ENCODE measurements at regions of chr15 and their contacts with region 1.

Region 1: GRCh38 chr15:73633111-73633990 is at the start of gene NPTN:
- DNase-seq: peak; percentile 98 to 100 (median 99)
- ATAC-seq: peak; percentile 95
- H3K4me3 ChIP-seq: peak within 1 kb of the TSS; percentile 96
- H3K4me1 ChIP-seq: peaks cover 46% of the 10 kb centered on the region
- CTCF ChIP-seq: no peak
- total RNA-seq, gene NPTN: 157 to 200 (median 168) TPM

Region 2: GRCh38 chr15:73550190-73550589 is 83.2 kb before region 1 on chr15:
- intact Hi-C with region 1: loop called (anchors 5 kb)
- DNase-seq: no peak
- ATAC-seq: no peak
- H3K4me3 ChIP-seq: no peak overlapping the region
- H3K4me1 ChIP-seq: no peaks in the 10 kb centered on the region
- CTCF ChIP-seq: no peak

Region 3: GRCh38 chr15:73560501-73561117 is 72.7 kb before region 1 on chr15:
- intact Hi-C with region 1: loop called in 1 of 2 experiments (anchors 5 kb)
- DNase-seq: peak in 1 of 3 donors; percentile 70
- ATAC-seq: peak; percentile 80
- H3K4me3 ChIP-seq: no peak overlapping the region
- H3K4me1 ChIP-seq: no peaks in the 10 kb centered on the region
- CTCF ChIP-seq: peak; percentile 22

Region 4: GRCh38 chr15:73683777-73684580 is 50.6 kb after region 1 on chr15 and contains the start of gene CD276:
- intact Hi-C with region 1: loop called in 1 of 2 experiments (anchors 10 kb)
- DNase-seq: peak; percentile 78 to 83 (median 82)
- ATAC-seq: peak; percentile 86
- H3K4me3 ChIP-seq: peak within 1 kb of the TSS; percentile 63
- H3K4me1 ChIP-seq: peaks cover 11% of the 10 kb centered on the region
- CTCF ChIP-seq: no peak
- total RNA-seq, gene CD276: 26.2 to 39.2 (median 29.9) TPM

Region 5: DNA sequence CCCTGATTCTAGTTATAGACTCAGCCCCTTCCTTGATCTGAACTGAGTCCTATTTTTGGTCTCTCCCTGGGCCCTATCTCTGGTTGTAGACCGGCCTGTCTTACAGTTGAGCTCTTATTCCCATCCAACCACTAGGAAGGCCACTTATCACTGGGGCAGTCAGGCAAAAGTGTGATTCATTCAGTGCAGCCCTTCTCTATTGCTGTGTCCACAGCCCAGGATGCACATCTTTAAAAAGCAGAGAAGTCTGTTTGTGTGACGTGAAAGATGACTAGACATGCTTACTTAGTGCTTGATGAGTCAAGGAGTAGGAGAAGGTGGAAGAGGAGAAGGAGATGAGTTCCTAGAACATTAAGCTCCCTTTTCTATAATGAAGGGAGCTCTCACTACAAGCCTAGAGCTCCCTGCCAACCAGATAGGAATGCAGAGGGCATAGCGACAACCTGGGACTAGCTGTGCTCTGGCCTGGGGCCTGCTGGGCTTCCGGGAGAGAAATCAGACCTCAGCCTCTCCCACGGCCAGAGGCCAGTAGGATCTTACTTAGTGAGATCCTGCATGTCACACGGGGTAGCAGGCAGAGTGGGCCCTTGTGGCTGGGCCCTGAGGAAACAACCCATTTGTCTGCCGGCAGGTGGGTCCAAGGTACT is 94.1 kb after region 1 on chr15:
- intact Hi-C with region 1: no loop called
- DNase-seq: no peak
- ATAC-seq: no peak
- H3K4me3 ChIP-seq: no peak overlapping the region
- H3K4me1 ChIP-seq: no peaks in the 10 kb centered on the region
- CTCF ChIP-seq: no peak

Measured in mucosa of descending colon (tissue), 3 donors.